ENCODE measurements at regions of chr21 and their contacts with region 1.

Region 1: DNA sequence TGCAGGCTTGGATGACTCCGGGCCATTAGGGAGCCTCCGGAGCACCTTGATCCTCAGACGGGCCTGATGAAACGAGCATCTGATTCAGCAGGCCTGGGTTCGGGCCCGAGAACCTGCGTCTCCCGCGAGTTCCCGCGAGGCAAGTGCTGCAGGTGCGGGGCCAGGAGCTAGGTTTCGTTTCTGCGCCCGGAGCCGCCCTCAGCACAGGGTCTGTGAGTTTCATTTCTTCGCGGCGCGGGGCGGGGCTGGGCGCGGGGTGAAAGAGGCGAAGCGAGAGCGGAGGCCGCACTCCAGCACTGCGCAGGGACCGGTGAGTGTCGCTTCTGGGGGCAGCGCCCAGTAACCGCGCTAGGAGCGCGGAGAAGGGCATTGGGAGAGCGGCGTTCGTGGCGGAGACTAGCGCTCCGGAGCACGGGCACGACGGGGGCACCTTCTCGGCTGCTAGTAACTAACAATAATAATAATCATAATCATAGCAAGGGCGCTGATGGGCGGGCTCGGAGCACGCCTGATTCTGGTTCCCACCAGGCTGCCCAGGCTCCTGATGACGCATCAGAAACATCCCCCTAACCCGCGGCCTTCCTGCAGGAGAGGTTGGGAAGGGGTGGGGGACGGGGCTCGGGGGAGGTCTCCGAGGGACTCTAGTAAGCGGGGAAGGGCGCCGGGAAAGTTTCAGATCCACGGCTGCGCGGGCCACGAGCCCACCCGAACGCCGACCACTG is at the start of gene MX1:
- DNase-seq: peak; percentile 97
- ATAC-seq: peak; percentile 96
- H3K4me3 Mint-ChIP-seq: peak within 1 kb of the TSS; percentile 97
- H3K27ac Mint-ChIP-seq: peak within 1 kb of the TSS; percentile 98
- H3K4me1 Mint-ChIP-seq: peaks cover 67% of the 10 kb centered on the region
- H3K27me3 Mint-ChIP-seq: no peaks in the 10 kb centered on the region
- total RNA-seq, gene MX1: 609 to 666 TPM

Region 2: GRCh38 chr21:41283211-41283818 is 142.8 kb before region 1 on chr21:
- POLR2A ChIA-PET with region 1: interaction called, 13 read pairs
- DNase-seq: no peak
- ATAC-seq: peak; percentile 93
- H3K4me3 Mint-ChIP-seq: no peak overlapping the region
- H3K27ac Mint-ChIP-seq: no peak overlapping the region
- H3K4me1 Mint-ChIP-seq: peaks cover 3% of the 10 kb centered on the region
- H3K27me3 Mint-ChIP-seq: peaks cover 36% of the 10 kb centered on the region

Region 3: GRCh38 chr21:41361786-41362604 is 64.1 kb before region 1 on chr21 and contains the start of gene MX2:
- POLR2A ChIA-PET with region 1: interaction called, 233 read pairs
- DNase-seq: peak; percentile 82
- ATAC-seq: peak; percentile 79
- H3K4me3 Mint-ChIP-seq: peak within 1 kb of the TSS; percentile 91
- H3K27ac Mint-ChIP-seq: peak within 1 kb of the TSS; percentile 99
- H3K4me1 Mint-ChIP-seq: peaks cover 47% of the 10 kb centered on the region
- H3K27me3 Mint-ChIP-seq: no peaks in the 10 kb centered on the region
- total RNA-seq, gene MX2: 103 to 106 TPM

Region 4: DNA sequence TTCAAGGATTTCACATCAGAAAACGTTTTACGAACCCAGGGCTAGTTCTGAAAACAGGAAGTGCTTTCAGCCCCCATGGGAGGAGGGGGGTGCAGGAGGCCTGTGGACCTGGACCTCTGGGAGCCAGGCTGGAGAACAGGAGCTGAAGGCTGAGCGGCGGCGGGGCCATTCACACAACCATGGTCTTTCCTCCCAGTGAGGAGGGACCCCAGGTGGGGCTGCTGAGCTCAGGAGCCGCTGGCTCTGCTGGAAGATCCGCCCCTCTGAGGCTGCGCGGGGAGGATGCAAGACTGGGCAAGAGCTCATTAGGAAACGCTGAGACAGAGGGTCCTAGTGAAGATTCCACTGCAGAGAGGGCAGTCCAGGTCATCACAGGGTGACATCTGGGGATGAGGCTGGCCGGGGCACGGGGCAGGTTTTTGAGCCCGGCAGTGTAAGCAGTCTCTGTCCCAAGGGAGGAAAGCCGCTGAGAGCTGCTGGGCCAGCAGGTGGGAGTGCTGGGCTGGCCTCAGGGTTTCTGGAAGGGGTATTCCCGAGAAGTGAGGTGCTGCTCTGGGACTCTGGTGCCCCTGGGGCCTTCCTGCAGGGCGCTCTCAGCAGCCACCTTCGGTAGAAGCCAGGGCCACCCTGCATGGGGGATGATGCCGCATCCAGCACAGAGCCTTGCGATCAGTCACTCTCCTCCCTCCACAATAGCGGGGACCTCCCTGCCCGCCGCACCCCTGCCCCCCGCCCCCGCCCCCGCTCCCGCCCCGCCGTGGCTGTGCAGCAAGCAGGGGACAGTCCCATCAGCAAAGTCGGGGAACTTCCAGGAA is 56.8 kb before region 1 on chr21:
- POLR2A ChIA-PET with region 1: interaction called, 233 read pairs
- DNase-seq: peak; percentile 62
- ATAC-seq: peak; percentile 69
- H3K4me3 Mint-ChIP-seq: peak overlapping the region; percentile 80
- H3K27ac Mint-ChIP-seq: peak overlapping the region; percentile 95
- H3K4me1 Mint-ChIP-seq: peaks cover 63% of the 10 kb centered on the region
- H3K27me3 Mint-ChIP-seq: no peaks in the 10 kb centered on the region

Region 5: GRCh38 chr21:41374867-41375533 is 51.1 kb before region 1 on chr21:
- POLR2A ChIA-PET with region 1: interaction called, 147 read pairs
- DNase-seq: no peak
- ATAC-seq: no peak
- H3K4me3 Mint-ChIP-seq: no peak overlapping the region
- H3K27ac Mint-ChIP-seq: peak overlapping the region; percentile 79
- H3K4me1 Mint-ChIP-seq: peaks cover 31% of the 10 kb centered on the region
- H3K27me3 Mint-ChIP-seq: no peaks in the 10 kb centered on the region

Region 6: DNA sequence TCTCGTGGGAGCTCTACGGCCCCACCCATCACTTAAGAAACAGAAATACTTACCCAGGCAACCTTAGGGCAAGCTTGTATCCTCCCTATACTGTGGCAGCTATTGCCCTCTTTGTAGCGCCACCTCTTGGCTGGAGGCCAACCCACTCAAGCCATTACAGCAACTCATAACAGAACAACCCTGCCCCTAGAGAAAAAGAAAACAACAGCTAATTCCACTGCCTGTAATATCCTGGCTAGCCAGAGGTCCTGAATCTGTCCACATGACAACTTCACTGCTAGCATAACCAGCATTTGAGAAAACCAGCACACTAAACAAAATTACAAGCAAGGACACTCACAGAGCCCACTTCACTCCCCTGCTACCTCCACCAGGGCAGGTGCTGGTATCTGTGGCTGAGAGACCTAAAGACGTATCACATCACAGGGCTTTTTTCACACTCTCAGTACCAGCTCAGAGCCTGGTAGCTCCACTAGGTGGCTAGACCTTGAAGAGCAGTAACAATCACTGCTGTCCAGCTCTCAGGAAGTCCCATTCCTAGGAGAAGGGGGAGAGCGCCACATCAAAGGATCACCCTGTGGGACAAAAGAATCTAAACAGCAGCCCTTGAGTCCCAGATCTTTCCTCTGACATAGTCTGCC is 14.5 kb before region 1 on chr21:
- POLR2A ChIA-PET with region 1: interaction called, 32 read pairs
- DNase-seq: no peak
- ATAC-seq: peak; percentile 50
- H3K4me3 Mint-ChIP-seq: no peak overlapping the region
- H3K27ac Mint-ChIP-seq: peak overlapping the region; percentile 15
- H3K4me1 Mint-ChIP-seq: peaks cover 21% of the 10 kb centered on the region
- H3K27me3 Mint-ChIP-seq: peaks cover 8% of the 10 kb centered on the region

Region 7: DNA sequence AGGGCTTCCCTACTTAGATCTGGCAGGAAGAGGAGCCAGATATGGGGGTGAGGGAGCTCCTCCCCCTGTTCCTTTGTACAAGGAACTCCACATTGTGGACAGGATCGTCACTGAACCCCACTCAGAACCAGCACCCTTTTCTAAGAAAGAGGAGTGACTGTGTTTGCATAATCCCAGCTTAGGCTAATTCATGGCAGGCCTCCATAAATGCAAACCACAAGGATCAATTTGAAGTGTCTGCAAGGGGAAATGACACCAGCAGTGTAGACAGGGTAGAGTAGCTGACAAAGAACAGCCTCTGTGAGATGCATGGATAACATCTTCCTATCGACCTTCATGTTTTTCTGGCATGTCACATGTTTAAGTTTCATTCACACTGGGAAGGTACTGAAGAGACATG is 11.6 kb after region 1 on chr21:
- POLR2A ChIA-PET with region 1: interaction called, 19 read pairs
- DNase-seq: no peak
- ATAC-seq: peak; percentile 20
- H3K4me3 Mint-ChIP-seq: no peak overlapping the region
- H3K27ac Mint-ChIP-seq: peak overlapping the region; percentile 63
- H3K4me1 Mint-ChIP-seq: peaks cover 71% of the 10 kb centered on the region
- H3K27me3 Mint-ChIP-seq: no peaks in the 10 kb centered on the region

Measured in activated naive CD8-positive, alpha-beta T cell treated with anti-CD3 and anti-CD28 coated beads, Interleukin-2, amount 10 ng/mL, durations not matched to agents 7 days and 5 days (primary cell).